ENCODE measurements at regions of chr19 and their contacts with region 1.

Region 1: GRCh38 chr19:41449079-41449864 is 6.3 kb downstream of the ERICH4 start:
- DNase-seq: peak; percentile 57
- ATAC-seq: peak; percentile 91
- H3K4me3 ChIP-seq: peak overlapping the region; percentile 59
- H3K27ac ChIP-seq: no peak overlapping the region
- H3K4me1 ChIP-seq: no peaks in the 10 kb centered on the region
- H3K27me3 ChIP-seq: no peaks in the 10 kb centered on the region
- CTCF ChIP-seq: peak; percentile 88

Region 2: GRCh38 chr19:41297628-41298347 is 151.5 kb before region 1 on chr19:
- CTCF ChIA-PET with region 1: no interaction called
- POLR2A ChIA-PET with region 1: no interaction called
- intact Hi-C with region 1: no loop called
- DNase-seq: no peak
- ATAC-seq: no peak
- H3K4me3 ChIP-seq: no peak overlapping the region
- H3K27ac ChIP-seq: no peak overlapping the region
- H3K4me1 ChIP-seq: no peaks in the 10 kb centered on the region
- H3K27me3 ChIP-seq: no peaks in the 10 kb centered on the region
- CTCF ChIP-seq: no peak

Region 3: DNA sequence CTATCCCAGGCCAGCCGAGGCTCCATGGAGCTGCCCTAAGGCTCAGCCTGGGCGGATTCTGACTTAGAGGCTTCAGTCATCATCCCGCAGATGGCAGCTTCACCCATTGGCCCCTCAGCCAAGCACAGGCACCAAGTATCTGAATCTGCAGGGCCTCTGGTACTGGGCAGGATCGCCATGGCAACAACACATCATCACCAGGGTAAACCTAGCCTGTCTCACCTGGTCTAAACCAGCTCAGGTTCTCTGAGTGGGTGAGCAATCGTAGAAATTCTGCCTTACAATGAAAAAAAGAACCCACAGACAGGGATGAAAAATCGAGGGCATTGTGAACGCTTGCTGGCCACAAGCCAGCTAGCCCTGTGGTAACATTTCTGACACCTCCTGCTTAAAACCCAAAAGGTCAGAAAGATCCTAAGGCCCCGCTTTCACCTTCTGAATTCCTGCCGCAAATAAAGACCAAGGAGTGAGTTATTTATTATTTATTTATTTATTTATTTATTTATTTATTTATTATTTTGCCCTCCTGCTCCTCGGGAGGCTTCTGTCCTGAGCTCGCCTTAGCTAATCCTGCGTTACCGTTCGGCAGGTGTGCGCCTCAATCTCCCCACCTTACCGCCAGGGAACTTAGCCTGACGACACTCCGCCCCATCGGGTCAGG is 114.7 kb after region 1 on chr19:
- CTCF ChIA-PET with region 1: interaction called, 5 read pairs
- POLR2A ChIA-PET with region 1: no interaction called
- intact Hi-C with region 1: loop called (anchors 1 kb)
- DNase-seq: peak; percentile 22
- ATAC-seq: peak; percentile 13; the same call in 1 of the 2 replicates
- H3K4me3 ChIP-seq: no peak overlapping the region
- H3K27ac ChIP-seq: no peak overlapping the region
- H3K4me1 ChIP-seq: no peaks in the 10 kb centered on the region
- H3K27me3 ChIP-seq: peaks cover 52% of the 10 kb centered on the region
- CTCF ChIP-seq: no peak

Measured in PC-3 (cell line).